CD8-positive, alpha-beta T cell (primary cell): ENCODE measurements at regions of chr13 and their contacts with region 1.

Region 1: GRCh38 chr13:29713839-29714238 is 118.4 kb upstream of the SLC7A1 start:
- DNase-seq: peak in 2 of 9 experiments; percentile 10 to 30
- ATAC-seq: no peak
- H3K4me3 ChIP-seq: no peak overlapping the region
- H3K4me3 Mint-ChIP-seq: no peak overlapping the region
- H3K27ac ChIP-seq: no peak overlapping the region
- H3K27ac Mint-ChIP-seq: no peak overlapping the region
- H3K4me1 ChIP-seq: no peaks in the 10 kb centered on the region
- H3K4me1 Mint-ChIP-seq: no peaks in the 10 kb centered on the region
- H3K27me3 ChIP-seq: no peaks in the 10 kb centered on the region
- H3K27me3 Mint-ChIP-seq: peaks cover 16% of the 10 kb centered on the region
- CTCF ChIP-seq: peak; percentile 52

Region 2: GRCh38 chr13:29564818-29565217 is 149.0 kb before region 1 on chr13:
- CTCF ChIA-PET with region 1: interaction called, 4 read pairs
- POLR2A ChIA-PET with region 1: no interaction called
- intact Hi-C with region 1: loop called in 1 of 2 experiments (anchors 2 kb)
- DNase-seq: no peak
- ATAC-seq: no peak
- H3K4me3 ChIP-seq: no peak overlapping the region
- H3K4me3 Mint-ChIP-seq: no peak overlapping the region
- H3K27ac ChIP-seq: no peak overlapping the region
- H3K27ac Mint-ChIP-seq: peak overlapping the region; percentile 7
- H3K4me1 ChIP-seq: no peaks in the 10 kb centered on the region
- H3K4me1 Mint-ChIP-seq: peaks cover 23% of the 10 kb centered on the region
- H3K27me3 ChIP-seq: no peaks in the 10 kb centered on the region
- H3K27me3 Mint-ChIP-seq: no peaks in the 10 kb centered on the region
- CTCF ChIP-seq: no peak